ENCODE measurements at regions of chr3 and their contacts with region 1.

Region 1: GRCh38 chr3:102229062-102229655 is 205.7 kb upstream of the ZPLD1 start:
- DNase-seq: peak; percentile 94
- ATAC-seq: peak; percentile 31
- H3K4me3 ChIP-seq: no peak overlapping the region
- H3K27ac ChIP-seq: no peak overlapping the region
- H3K4me1 ChIP-seq: peaks cover 39% of the 10 kb centered on the region
- H3K27me3 ChIP-seq: no peaks in the 10 kb centered on the region
- CTCF ChIP-seq: peak; percentile 96

Region 2: GRCh38 chr3:101868534-101869464 is 360.4 kb before region 1 on chr3:
- CTCF ChIA-PET with region 1: interaction called, 7 read pairs
- POLR2A ChIA-PET with region 1: interaction called, 4 read pairs
- intact Hi-C with region 1: loop called (anchors 2 kb)
- DNase-seq: peak; percentile 47
- ATAC-seq: no peak
- H3K4me3 ChIP-seq: no peak overlapping the region
- H3K27ac ChIP-seq: peak overlapping the region; percentile 15
- H3K4me1 ChIP-seq: peaks cover 47% of the 10 kb centered on the region
- H3K27me3 ChIP-seq: no peaks in the 10 kb centered on the region
- CTCF ChIP-seq: no peak

Region 3: GRCh38 chr3:102034639-102035451 is 194.3 kb before region 1 on chr3:
- CTCF ChIA-PET with region 1: no interaction called
- POLR2A ChIA-PET with region 1: no interaction called
- intact Hi-C with region 1: loop called (anchors 1 kb)
- DNase-seq: peak; percentile 68
- ATAC-seq: peak; percentile 85
- H3K4me3 ChIP-seq: no peak overlapping the region
- H3K27ac ChIP-seq: peak overlapping the region; percentile 60
- H3K4me1 ChIP-seq: peaks cover 15% of the 10 kb centered on the region
- H3K27me3 ChIP-seq: no peaks in the 10 kb centered on the region
- CTCF ChIP-seq: no peak

Region 4: DNA sequence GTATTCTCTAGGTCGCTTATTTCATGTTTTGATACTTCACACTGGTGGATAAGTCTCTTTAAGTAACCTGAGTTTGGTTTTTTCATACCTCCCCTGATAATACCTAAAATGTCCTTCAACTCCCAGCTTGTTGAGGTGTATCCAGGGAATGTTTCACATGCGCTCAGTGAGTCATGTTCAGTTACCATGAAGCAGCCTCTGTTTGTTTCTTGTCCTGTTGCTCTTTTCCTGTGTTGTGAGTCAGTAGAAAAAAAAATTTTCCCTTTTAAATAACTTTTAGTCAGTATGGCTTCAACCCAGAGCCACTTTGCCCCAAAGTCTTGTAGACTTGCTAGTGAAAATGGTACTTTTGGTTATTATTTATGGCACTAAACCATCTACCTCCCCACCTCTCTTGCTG is 72.7 kb before region 1 on chr3:
- CTCF ChIA-PET with region 1: interaction called, 6 read pairs
- POLR2A ChIA-PET with region 1: no interaction called
- intact Hi-C with region 1: loop called (anchors 1 kb)
- DNase-seq: peak; percentile 94
- ATAC-seq: peak; percentile 90
- H3K4me3 ChIP-seq: no peak overlapping the region
- H3K27ac ChIP-seq: peak overlapping the region; percentile 96
- H3K4me1 ChIP-seq: peaks cover 34% of the 10 kb centered on the region
- H3K27me3 ChIP-seq: no peaks in the 10 kb centered on the region
- CTCF ChIP-seq: no peak

Region 5: DNA sequence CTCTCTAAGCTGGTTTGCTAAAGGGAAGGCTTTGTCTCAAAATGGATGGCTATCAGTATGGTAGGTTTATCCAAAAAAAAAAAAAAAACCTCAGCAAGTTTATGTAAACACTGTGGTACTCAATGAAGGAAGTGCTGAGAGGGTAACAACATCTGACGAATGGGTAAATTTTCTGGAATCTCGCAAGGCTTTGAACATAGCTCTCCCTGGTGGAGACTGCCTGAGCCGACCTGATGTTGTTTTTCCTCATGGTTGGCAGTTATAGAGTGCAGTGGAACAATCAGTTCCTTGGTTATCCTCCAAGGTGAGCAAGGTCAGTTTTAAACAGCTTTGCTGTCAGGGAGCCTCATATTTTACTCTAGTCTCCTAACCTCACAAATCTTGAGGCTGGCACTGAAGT is 300.3 kb after region 1 on chr3:
- CTCF ChIA-PET with region 1: interaction called, 5 read pairs
- POLR2A ChIA-PET with region 1: no interaction called
- intact Hi-C with region 1: loop called (anchors 1 kb)
- DNase-seq: peak; percentile 77
- ATAC-seq: peak; percentile 55
- H3K4me3 ChIP-seq: no peak overlapping the region
- H3K27ac ChIP-seq: peak overlapping the region; percentile 95
- H3K4me1 ChIP-seq: peaks cover 37% of the 10 kb centered on the region
- H3K27me3 ChIP-seq: no peaks in the 10 kb centered on the region
- CTCF ChIP-seq: peak; percentile 87

Region 6: DNA sequence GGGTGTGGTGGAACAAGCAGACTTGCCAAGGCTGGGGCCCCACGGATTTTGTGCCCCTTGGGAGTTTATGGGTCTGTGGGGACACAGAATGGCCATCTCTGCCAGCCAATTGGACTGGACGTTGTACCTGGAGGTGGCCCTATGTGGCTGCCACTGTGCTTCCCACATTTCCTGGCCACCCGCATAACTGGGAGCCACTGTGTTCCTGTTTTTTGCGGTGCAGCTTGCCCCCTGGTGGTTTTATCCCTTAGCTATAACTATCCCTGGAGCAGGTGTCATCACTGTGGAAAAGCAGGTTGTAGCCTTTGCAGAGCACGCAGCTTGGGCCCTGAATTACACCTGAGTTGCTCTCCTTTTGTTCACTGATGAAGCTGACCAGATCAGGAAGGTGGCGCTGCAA is 511.9 kb after region 1 on chr3:
- CTCF ChIA-PET with region 1: interaction called, 3 read pairs
- POLR2A ChIA-PET with region 1: no interaction called
- intact Hi-C with region 1: loop called (anchors 1 kb)
- DNase-seq: peak; percentile 46
- ATAC-seq: peak; percentile 77
- H3K4me3 ChIP-seq: no peak overlapping the region
- H3K27ac ChIP-seq: no peak overlapping the region
- H3K4me1 ChIP-seq: no peaks in the 10 kb centered on the region
- H3K27me3 ChIP-seq: no peaks in the 10 kb centered on the region
- CTCF ChIP-seq: peak; percentile 52